ENCODE measurements at regions of chr11 and their contacts with region 1.

Region 1: DNA sequence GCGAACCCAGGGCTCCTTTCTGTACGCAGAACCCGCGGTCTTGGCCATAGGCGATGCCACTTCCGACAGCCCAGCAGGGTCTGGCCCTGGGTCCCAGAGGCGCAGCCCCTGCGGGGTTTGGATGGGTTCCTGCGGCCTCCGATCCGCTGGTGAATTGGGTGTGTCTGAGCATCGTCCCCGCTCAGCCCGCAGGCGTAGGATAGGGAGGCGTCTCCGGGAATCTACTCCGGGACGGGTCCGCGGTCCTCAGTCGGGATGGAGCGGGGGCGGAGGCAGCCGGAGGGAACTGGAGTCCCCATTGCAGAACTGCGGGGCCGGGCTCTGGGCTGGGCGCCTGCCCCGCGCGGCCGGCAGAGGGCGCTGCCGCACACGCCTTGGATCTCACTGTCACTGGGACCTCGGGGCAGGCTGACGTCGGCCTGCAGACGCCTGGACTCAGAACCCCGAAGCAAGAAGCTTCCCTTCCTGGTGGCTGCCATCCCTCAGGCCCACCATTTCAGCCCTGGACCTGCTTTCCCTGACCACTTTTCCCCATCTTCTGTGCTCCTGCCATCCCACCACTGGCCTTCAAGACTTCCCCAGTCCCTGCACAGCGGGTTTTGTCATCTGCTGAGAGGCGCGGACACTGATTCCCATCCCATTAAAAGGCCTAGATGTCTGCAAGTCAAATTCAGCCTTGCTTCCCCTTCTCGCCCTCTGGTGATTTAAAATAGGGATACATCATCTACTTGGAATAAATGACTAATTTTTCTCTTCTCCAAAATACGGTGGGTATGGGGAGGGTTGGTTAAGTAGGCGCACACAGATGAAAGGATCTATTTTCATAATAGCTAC is 38.3 kb upstream of the CREB3L1 start:
- DNase-seq: peak; percentile 95

Region 2: DNA sequence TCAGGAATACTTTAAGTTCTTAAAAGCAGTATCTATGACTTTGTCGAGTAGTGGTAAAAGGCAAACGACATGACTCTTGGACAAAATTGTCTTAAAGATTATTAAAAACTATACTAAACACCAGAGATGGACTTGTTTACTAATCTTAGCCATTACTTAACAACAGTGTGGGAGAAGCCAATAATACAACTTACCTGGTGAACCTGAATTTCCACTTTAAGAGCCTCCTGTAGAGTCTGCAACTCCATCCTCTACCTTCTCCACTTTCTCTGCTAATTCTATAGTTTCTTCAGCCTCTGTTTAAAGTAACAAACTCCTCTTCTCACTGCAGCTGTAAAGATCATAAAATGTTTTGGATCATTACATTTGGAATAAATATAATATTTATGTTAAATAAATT is 155.2 kb before region 1 on chr11:
- intact Hi-C with region 1: no loop called
- DNase-seq: no peak

Region 3: GRCh38 chr11:46121724-46122477 is 117.3 kb before region 1 on chr11:
- intact Hi-C with region 1: loop called (anchors 5 kb)
- DNase-seq: peak; percentile 88

Region 4: DNA sequence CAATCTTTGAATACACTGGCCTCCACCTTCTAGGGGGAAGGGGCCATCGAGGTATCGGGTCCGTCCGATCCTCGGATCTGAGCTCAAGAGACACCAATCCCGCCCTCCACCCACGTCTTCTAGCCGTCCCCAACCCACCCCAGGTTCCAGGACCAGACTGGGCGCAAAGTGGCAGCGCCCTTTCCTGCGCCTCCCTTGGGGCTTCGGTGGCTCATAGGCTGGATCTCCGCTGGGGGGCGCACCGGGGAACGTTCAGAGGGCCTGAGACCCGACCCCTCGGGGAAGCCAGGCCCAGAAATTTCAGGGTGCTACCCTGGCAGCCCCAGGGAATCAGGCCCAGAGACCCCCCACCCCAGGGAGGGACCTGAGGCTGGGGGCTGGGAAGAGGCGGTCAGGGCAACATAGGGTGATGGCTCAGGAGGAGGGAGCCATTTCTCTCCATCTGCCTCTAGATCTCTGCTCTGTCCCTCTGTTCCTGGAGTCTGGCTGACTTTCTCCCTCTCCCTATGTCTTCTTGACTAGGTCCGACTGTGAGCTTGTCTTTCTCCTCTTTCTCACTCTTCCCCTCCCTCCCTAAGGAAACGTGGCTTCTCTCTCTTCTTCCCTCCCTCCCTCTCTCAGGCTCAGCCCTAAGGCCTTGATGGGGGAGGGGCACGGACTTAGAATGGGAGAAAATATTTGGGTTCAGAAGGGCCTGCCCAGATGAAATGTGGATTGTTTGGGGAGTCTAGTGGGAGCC is 39.4 kb after region 1 on chr11:
- intact Hi-C with region 1: loop called (anchors 5 kb)
- DNase-seq: no peak

Region 5: DNA sequence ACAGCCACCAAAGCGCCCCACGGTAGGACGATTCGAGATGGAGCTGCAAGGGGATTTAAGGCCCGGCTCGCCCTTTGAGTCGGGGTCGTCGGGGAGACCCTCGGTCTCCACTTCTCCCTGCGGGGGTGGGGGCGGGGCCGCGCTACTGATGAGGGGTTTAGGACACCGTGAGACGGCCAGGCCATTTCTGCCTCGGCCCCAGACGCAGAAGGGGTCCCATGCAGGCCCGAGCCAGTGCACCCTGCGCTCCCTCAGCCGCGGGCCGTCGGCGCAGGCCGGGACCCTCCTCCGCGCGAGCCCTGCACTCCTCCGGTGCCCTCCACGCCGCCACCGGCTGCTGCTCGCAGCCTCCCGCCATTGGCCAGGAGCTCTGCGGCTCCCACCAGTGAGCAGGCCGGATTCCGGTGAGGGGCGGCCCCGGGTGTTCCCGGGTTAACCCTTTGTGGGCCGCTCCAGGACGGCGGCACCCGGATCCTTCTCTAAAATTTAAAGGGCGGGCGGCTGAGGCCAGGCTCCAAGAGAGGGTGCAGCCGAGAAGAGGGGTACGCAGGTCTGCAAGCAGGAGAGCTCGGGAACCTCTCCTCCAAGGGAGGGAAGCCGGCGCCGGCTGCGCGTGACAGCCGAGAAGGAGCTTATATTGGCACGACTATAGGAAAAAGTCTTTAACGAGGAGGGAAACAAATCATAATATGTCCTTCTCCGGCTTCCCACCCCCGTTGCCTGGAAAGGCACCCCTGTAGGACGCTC is 56.3 kb after region 1 on chr11:
- intact Hi-C with region 1: loop called (anchors 2 kb)
- DNase-seq: peak; percentile 86

Region 6: GRCh38 chr11:46308631-46309419 is 69.6 kb after region 1 on chr11:
- intact Hi-C with region 1: loop called (anchors 2 kb)
- DNase-seq: peak; percentile 88

Region 7: GRCh38 chr11:46367244-46367915 is 128.2 kb after region 1 on chr11:
- intact Hi-C with region 1: loop called (anchors 2 kb)
- DNase-seq: peak; percentile 91